ENCODE measurements at regions of chr6 and their contacts with region 1.

Region 1: DNA sequence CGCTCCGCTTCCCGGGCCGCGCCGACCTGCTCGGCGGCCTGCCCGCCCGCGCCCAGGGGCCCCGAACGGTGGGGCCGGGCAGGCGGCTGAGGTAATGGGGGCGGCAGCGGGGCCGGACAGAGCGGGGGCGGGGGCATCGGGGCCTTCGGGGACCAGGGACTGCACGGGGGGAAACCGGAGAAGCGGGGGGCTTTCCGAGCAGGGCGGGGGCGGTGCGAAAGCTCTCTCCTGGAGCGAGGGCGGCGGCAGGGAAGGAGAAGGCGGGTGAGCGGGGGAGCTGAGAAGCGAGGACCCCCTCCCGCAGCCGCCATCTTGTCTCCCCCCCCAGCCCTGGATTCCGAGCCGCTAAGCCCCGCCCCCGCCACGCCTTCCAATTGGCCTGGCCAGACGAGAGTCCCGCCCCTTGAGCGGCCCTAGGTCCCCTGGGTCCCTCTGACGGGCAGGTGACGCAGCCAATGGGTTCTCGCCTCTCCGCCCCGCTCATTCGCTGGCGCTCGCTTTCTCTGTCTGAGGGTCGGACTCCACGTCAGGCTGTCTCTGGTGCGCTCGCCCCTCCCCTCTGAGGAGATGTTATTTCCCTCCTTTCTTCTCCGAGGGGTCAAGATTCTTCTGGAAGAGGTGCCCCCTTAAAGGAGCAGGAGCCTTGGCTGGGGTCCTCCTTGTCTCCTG is 470 bp downstream of the BRPF3 start:
- DNase-seq: peak; percentile 99 to 100 (median 100)
- ATAC-seq: peak; percentile 91
- H3K4me3 ChIP-seq: peak overlapping the region; percentile 61 to 68
- H3K4me3 Mint-ChIP-seq: peak overlapping the region; percentile 88
- H3K27ac ChIP-seq: peak overlapping the region; percentile 74 to 77
- H3K27ac Mint-ChIP-seq: peak overlapping the region; percentile 94
- H3K4me1 ChIP-seq: peaks cover 29% of the 10 kb centered on the region
- H3K4me1 Mint-ChIP-seq: peaks cover 55% of the 10 kb centered on the region
- H3K27me3 ChIP-seq: no peaks in the 10 kb centered on the region
- H3K27me3 Mint-ChIP-seq: no peaks in the 10 kb centered on the region
- CTCF ChIP-seq: no peak

Region 2: DNA sequence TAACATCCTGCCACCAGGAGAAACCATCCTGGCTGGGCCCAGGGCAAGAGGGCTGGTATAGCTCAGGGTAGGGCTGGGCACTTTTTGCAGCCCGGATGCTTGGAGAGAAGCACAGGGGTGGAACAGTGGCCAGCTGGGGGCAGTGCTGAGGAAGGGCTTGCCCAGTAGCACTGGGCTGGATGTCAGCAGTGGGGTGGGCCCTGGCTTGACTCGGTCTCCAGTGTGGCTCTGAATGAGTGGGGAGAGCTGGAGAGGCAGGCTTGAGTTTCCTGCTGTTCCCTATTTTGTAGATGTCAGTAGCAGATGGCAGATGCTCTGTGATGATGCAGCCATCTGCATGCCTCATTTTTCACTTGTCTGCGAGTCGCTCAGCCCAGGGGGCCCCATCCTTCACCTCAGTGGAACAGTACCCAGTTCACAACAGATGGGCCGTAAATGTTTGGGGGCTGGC is 628.0 kb before region 1 on chr6:
- CTCF ChIA-PET with region 1: no interaction called
- POLR2A ChIA-PET with region 1: no interaction called
- intact Hi-C with region 1: no loop called
- DNase-seq: peak in 7 of 9 experiments; percentile 5 to 62 (median 40)
- ATAC-seq: peak; percentile 48
- H3K4me3 ChIP-seq: no peak overlapping the region
- H3K4me3 Mint-ChIP-seq: no peak overlapping the region
- H3K27ac ChIP-seq: no peak overlapping the region
- H3K27ac Mint-ChIP-seq: peak overlapping the region; percentile 66
- H3K4me1 ChIP-seq: no peaks in the 10 kb centered on the region
- H3K4me1 Mint-ChIP-seq: peaks cover 8% of the 10 kb centered on the region
- H3K27me3 ChIP-seq: no peaks in the 10 kb centered on the region
- H3K27me3 Mint-ChIP-seq: peaks cover 4% of the 10 kb centered on the region
- CTCF ChIP-seq: no peak

Region 3: GRCh38 chr6:35920793-35921732 is 276.0 kb before region 1 on chr6 and contains the start of gene SRPK1:
- CTCF ChIA-PET with region 1: no interaction called
- POLR2A ChIA-PET with region 1: interaction called, 3 read pairs
- intact Hi-C with region 1: loop called (anchors 2 to 5 kb)
- DNase-seq: peak; percentile 66 to 90 (median 81)
- ATAC-seq: peak; percentile 76
- H3K4me3 ChIP-seq: peak within 1 kb of the TSS; percentile 63 to 67
- H3K4me3 Mint-ChIP-seq: peak within 1 kb of the TSS; percentile 96
- H3K27ac ChIP-seq: peak within 1 kb of the TSS; percentile 42 to 62
- H3K27ac Mint-ChIP-seq: peak within 1 kb of the TSS; percentile 93
- H3K4me1 ChIP-seq: peaks cover 19% of the 10 kb centered on the region
- H3K4me1 Mint-ChIP-seq: peaks cover 41% of the 10 kb centered on the region
- H3K27me3 ChIP-seq: no peaks in the 10 kb centered on the region
- H3K27me3 Mint-ChIP-seq: no peaks in the 10 kb centered on the region
- CTCF ChIP-seq: no peak
- total RNA-seq, gene SRPK1: 21.0 to 22.7 TPM

Region 4: DNA sequence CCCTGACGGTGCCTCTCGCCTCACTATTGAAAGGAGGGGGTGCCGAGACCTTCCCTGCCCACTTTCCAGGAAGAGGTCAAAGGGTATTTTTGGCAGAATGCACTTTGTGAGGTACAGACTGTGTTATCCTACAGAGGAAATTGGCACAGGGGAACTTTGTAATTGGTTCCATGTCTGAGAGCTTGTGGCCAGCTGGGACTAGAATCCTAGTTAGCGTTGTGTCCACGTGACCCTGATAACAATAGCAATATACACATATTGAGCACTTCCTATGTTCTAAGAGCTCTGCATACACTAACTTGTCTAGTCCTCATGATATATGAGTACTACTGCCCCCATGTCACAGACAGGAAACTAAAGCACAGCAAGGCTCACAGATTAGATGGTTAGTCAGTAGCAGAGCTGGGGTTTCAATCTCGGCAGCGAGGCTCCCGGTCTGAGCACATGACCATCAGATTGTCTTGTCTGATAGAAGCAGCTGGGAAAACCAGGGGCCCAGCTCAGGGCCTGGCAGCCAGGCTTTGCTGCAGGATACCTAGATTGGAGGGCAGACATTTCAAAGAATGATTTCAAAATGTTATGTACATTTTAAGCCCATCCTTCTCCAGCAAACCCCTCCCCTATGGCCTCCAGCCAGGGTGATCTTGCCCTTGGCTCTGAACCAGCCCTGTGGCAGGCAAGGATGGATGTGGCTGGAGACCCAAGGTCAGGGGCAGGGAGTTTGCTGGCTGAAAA is 65.3 kb before region 1 on chr6:
- CTCF ChIA-PET with region 1: interaction called, 4 read pairs
- POLR2A ChIA-PET with region 1: interaction called, 10 read pairs
- intact Hi-C with region 1: loop called (anchors 1 to 2 kb)
- DNase-seq: peak in 8 of 9 experiments; percentile 22 to 78 (median 48)
- ATAC-seq: peak; percentile 71
- H3K4me3 ChIP-seq: peak overlapping the region; percentile 79 to 89
- H3K4me3 Mint-ChIP-seq: peak overlapping the region; percentile 88
- H3K27ac ChIP-seq: peak overlapping the region; percentile 81 to 92
- H3K27ac Mint-ChIP-seq: peak overlapping the region; percentile 95
- H3K4me1 ChIP-seq: peaks cover 48% of the 10 kb centered on the region
- H3K4me1 Mint-ChIP-seq: peaks cover 54% of the 10 kb centered on the region
- H3K27me3 ChIP-seq: no peaks in the 10 kb centered on the region
- H3K27me3 Mint-ChIP-seq: no peaks in the 10 kb centered on the region
- CTCF ChIP-seq: no peak